B cell (primary cell): ENCODE measurements at regions of chr9 and their contacts with region 1.

Region 1: GRCh38 chr9:34328987-34329832 is at the starts of genes KIF24 and NUDT2:
- DNase-seq: peak; percentile 99
- ATAC-seq: peak; percentile 91
- H3K4me3 ChIP-seq: peak within 1 kb of the TSS; percentile 90 to 99 (median 97)
- H3K4me3 Mint-ChIP-seq: peak within 1 kb of the TSS; percentile 96
- H3K27ac ChIP-seq: peak within 1 kb of the TSS; percentile 92 to 99
- H3K27ac Mint-ChIP-seq: peak within 1 kb of the TSS; percentile 93
- H3K4me1 ChIP-seq: peaks cover 14 to 25% of the 10 kb centered on the region in 2 donors
- H3K4me1 Mint-ChIP-seq: peaks cover 29% of the 10 kb centered on the region
- H3K27me3 ChIP-seq: no peaks in the 10 kb centered on the region
- H3K27me3 Mint-ChIP-seq: no peaks in the 10 kb centered on the region
- CTCF ChIP-seq: no peak
- total RNA-seq, gene KIF24: 0.79 and 0.87 TPM in 2 replicates
- total RNA-seq, gene NUDT2: 16.1 and 20.4 TPM in 2 replicates

Region 2: DNA sequence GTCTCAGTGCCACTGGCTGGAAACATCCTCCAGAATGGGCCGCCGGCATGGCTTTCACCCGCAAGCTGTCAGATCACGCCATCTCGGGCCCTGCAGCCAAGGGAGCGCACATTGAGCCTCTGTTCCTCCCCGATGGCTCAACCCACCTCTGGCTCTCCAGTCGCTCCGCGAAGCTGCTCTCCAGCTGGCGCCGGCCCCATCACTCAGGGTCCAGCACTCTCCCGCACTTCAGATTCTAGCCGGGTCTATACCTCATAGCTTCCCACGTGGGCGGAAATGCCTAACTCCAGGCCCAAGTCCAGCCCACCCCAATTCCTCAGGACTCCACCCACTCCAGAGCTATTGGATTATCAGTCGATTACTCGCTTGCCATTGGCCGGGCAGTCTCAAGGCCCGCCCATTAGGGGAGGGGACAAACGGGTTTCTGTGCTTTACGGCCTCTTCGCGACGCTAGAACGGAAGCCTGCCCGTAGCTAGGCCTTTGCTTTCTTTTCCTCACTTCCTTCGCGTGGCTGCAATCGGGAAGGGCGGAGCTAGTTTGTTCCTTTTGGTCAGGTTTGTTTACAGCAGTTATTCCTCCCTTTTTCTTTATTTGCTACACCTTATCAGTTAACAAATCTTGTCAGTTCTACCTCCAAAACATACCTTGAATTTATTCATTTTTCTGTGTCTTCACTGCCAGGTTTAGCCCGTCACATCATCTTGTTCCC is 855.4 kb before region 1 on chr9 and contains the start of gene NOL6:
- CTCF ChIA-PET with region 1: no interaction called
- POLR2A ChIA-PET with region 1: no interaction called
- intact Hi-C with region 1: loop called (anchors 10 kb)
- DNase-seq: peak; percentile 99
- ATAC-seq: peak; percentile 99
- H3K4me3 ChIP-seq: peak within 1 kb of the TSS; percentile 80 to 99 (median 95)
- H3K4me3 Mint-ChIP-seq: peak within 1 kb of the TSS; percentile 99
- H3K27ac ChIP-seq: peak within 1 kb of the TSS; percentile 44 to 81
- H3K27ac Mint-ChIP-seq: peak within 1 kb of the TSS; percentile 92
- H3K4me1 ChIP-seq: peaks cover 17 to 22% of the 10 kb centered on the region in 2 donors
- H3K4me1 Mint-ChIP-seq: peaks cover 28% of the 10 kb centered on the region
- H3K27me3 ChIP-seq: no peaks in the 10 kb centered on the region
- H3K27me3 Mint-ChIP-seq: no peaks in the 10 kb centered on the region
- CTCF ChIP-seq: no peak
- total RNA-seq, gene NOL6: 31.8 and 31.9 TPM in 2 replicates

Region 3: GRCh38 chr9:34178520-34179212 is 150.5 kb before region 1 on chr9 and contains the start of gene UBAP1:
- CTCF ChIA-PET with region 1: no interaction called
- POLR2A ChIA-PET with region 1: interaction called, 5 read pairs
- intact Hi-C with region 1: loop called (anchors 2 kb)
- DNase-seq: peak; percentile 95
- ATAC-seq: peak; percentile 99
- H3K4me3 ChIP-seq: peak within 1 kb of the TSS; percentile 68 to 94 (median 75)
- H3K4me3 Mint-ChIP-seq: peak within 1 kb of the TSS; percentile 92
- H3K27ac ChIP-seq: peak within 1 kb of the TSS; percentile 84 to 88
- H3K27ac Mint-ChIP-seq: peak within 1 kb of the TSS; percentile 93
- H3K4me1 ChIP-seq: peaks cover 8 to 21% of the 10 kb centered on the region in 2 donors
- H3K4me1 Mint-ChIP-seq: peaks cover 18% of the 10 kb centered on the region
- H3K27me3 ChIP-seq: peaks cover 0 to 17% (median 2%) of the 10 kb centered on the region in 4 experiments
- H3K27me3 Mint-ChIP-seq: no peaks in the 10 kb centered on the region
- CTCF ChIP-seq: no peak
- total RNA-seq, gene UBAP1: 27.0 and 29.3 TPM in 2 replicates

Region 4: DNA sequence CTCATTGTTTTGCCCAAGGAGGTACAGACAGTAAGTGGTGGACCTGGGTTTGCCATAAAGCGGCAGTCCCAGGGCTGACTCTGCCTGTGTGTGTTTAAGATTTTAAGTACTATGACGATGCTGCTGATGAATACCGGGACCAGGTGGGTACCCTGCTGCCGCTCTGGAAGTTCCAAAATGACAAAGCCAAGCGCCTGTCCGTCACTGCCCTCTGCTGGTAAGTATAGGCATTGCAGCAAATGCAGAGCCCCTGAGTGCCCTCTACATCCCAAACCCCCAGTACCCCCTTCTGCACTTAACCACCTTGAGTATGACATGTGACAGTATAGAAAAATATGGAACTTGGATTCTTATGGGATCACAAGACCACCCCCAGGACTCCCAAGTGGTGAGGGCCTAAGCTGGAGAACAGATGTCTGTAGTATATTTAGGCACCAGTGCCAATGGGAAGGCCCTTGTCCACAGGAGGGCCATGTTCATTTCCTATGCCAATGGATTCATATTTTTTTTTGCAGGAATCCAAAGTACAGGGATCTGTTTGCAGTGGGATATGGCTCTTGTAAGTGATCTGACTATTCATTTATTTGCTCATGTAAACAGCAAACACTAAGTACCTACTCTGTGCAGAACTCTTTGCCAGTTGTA is 171.5 kb after region 1 on chr9:
- CTCF ChIA-PET with region 1: interaction called, 43 read pairs
- POLR2A ChIA-PET with region 1: no interaction called
- intact Hi-C with region 1: no loop called
- DNase-seq: peak; percentile 78
- ATAC-seq: peak; percentile 86
- H3K4me3 ChIP-seq: no peak overlapping the region
- H3K4me3 Mint-ChIP-seq: no peak overlapping the region
- H3K27ac ChIP-seq: no peak overlapping the region
- H3K27ac Mint-ChIP-seq: no peak overlapping the region
- H3K4me1 ChIP-seq: peaks cover 0 to 3% of the 10 kb centered on the region in 2 donors
- H3K4me1 Mint-ChIP-seq: no peaks in the 10 kb centered on the region
- H3K27me3 ChIP-seq: peaks cover 0 to 10% (median 3%) of the 10 kb centered on the region in 4 experiments
- H3K27me3 Mint-ChIP-seq: peaks cover 38% of the 10 kb centered on the region
- CTCF ChIP-seq: peak; percentile 98

Region 5: DNA sequence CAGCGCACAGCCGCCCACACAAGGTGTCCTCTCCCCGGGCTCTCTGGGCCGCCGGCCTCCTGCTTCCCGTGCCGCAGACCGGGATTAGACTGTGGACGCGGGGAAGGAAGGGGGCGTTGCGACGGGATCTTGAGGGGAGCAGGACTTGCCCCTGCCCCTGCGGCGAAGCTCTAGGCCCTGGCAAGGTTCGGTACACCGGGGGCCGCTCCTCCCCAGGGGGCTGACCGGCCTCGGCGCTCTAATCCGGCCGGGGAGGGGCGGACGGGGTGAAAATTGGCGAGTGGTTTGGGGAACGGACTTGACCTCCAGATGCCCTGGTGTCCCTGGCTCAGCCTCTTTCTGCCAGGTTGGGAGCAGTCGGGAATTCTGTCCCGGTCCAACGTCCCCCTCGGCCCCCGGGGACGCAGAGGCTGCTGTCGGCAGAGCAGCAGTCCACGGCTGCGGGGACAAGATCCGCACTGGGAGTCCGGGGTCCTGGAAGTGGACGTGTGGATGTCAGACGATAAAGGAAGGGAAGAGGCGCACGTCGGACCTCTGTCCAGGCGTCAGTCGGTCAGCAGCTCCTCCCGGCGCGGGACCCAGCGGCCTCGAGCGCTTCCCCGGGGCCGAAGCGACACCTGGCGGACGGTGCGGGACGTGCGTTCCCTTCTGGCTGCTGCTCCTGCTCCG is 262.2 kb after region 1 on chr9:
- CTCF ChIA-PET with region 1: interaction called, 7 read pairs
- POLR2A ChIA-PET with region 1: no interaction called
- intact Hi-C with region 1: loop called (anchors 5 kb)
- DNase-seq: peak; percentile 85
- ATAC-seq: peak; percentile 92
- H3K4me3 ChIP-seq: peak overlapping the region; percentile 38 to 73 (median 48)
- H3K4me3 Mint-ChIP-seq: peak overlapping the region; percentile 81
- H3K27ac ChIP-seq: no peak overlapping the region
- H3K27ac Mint-ChIP-seq: no peak overlapping the region
- H3K4me1 ChIP-seq: peaks cover 40 to 49% of the 10 kb centered on the region in 2 donors
- H3K4me1 Mint-ChIP-seq: peaks cover 37% of the 10 kb centered on the region
- H3K27me3 ChIP-seq: peaks cover 0 to 81% (median 60%) of the 10 kb centered on the region in 4 experiments
- H3K27me3 Mint-ChIP-seq: peaks cover 75% of the 10 kb centered on the region
- CTCF ChIP-seq: peak; percentile 95

Region 6: DNA sequence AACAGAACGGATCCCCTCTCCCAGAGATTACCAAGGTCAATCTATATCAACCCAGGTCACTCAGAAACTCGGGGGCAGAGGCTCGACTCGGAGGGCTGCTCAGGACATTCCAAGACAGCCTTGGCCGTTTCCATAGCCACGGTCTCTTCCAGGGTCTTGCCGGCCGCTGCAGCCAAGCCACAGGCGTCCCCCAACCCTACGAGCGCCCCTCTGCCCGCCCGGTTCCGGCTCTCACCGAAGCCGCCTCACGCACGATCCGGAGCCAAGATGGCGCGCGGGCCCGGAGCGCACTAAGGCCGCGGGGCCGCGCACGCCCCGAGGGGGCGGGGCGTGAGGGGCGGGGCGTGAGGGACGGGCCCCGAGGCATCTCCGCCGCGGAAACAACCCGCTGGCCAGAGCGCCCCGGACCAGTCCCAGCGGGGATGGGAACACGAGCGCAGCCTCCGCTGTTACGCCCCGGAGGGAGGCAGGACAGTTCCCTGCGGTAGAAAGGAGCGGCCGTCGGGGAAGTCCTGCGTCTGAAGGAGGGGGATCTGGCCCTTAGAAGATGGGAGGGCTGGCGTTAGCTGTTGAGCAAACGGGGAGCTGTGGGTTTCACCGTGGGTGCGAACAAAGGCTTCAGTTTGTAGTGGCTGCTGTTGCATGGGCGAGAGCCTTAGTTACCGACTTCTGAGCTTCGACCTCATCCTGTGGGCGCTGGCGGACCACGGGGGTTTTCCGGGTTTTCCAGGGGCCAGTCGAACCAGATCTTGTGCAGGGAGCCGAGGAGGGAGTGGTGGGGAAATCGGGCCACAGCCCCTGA is 282.8 kb after region 1 on chr9 and contains the start of gene RPP25L:
- CTCF ChIA-PET with region 1: interaction called, 3 read pairs
- POLR2A ChIA-PET with region 1: no interaction called
- intact Hi-C with region 1: loop called (anchors 2 kb)
- DNase-seq: peak; percentile 91
- ATAC-seq: peak; percentile 95
- H3K4me3 ChIP-seq: peak within 1 kb of the TSS; percentile 69 to 97 (median 80)
- H3K4me3 Mint-ChIP-seq: peak within 1 kb of the TSS; percentile 91
- H3K27ac ChIP-seq: peak within 1 kb of the TSS; percentile 78 to 87
- H3K27ac Mint-ChIP-seq: peak within 1 kb of the TSS; percentile 90
- H3K4me1 ChIP-seq: peaks cover 7 to 21% of the 10 kb centered on the region in 2 donors
- H3K4me1 Mint-ChIP-seq: peaks cover 22% of the 10 kb centered on the region
- H3K27me3 ChIP-seq: no peaks in the 10 kb centered on the region
- H3K27me3 Mint-ChIP-seq: no peaks in the 10 kb centered on the region
- CTCF ChIP-seq: no peak
- total RNA-seq, gene RPP25L: 20.2 and 21.7 TPM in 2 replicates